MCF 10A (cell line): ENCODE measurements at regions of chr15 and their contacts with region 1.

Region 1: GRCh38 chr15:33737687-33738601 is 230.4 kb upstream of the CHRM5 start:
- DNase-seq: peak; percentile 61
- H3K4me3 Mint-ChIP-seq: no peak overlapping the region
- H3K27ac Mint-ChIP-seq: no peak overlapping the region
- H3K4me1 Mint-ChIP-seq: no peaks in the 10 kb centered on the region
- H3K27me3 Mint-ChIP-seq: no peaks in the 10 kb centered on the region
- CTCF ChIP-seq: peak; percentile 73

Region 2: DNA sequence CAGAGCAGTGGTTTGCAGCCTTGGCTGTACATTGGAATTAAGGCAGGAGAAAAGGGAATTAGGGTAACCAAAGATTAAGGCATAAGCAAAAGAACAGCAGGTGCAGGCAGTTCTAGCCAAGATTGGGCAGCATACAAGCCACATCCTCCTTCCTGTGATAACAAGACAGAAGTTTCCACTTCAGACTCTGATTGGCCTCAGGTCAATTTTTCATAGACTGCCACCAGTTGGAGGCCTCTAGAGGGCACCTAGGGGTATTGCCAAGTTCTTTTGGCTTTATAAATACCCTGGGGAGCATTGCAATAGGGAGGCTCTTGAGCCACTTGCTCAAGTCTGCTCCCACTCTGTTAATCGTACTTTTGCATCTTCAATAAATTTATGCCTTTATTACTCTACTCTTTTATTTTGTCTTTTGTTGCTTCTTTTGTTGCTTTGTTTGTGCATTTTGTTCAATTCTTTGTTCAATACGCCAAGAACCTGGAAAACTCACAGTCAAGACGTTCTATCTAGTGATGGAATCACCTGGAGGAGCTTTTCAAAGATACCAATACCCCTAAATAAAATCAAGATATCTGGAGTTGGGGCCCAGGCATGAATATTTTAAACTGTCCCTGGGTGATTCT is 511.3 kb before region 1 on chr15:
- CTCF ChIA-PET with region 1: interaction called, 45 read pairs
- POLR2A ChIA-PET with region 1: no interaction called
- intact Hi-C with region 1: no loop called
- DNase-seq: peak; percentile 65
- H3K4me3 Mint-ChIP-seq: no peak overlapping the region
- H3K27ac Mint-ChIP-seq: no peak overlapping the region
- H3K4me1 Mint-ChIP-seq: no peaks in the 10 kb centered on the region
- H3K27me3 Mint-ChIP-seq: peaks cover 14% of the 10 kb centered on the region
- CTCF ChIP-seq: peak; percentile 51

Region 3: GRCh38 chr15:33292717-33293307 is 445.1 kb before region 1 on chr15:
- CTCF ChIA-PET with region 1: interaction called, 48 read pairs
- POLR2A ChIA-PET with region 1: no interaction called
- intact Hi-C with region 1: no loop called
- DNase-seq: peak; percentile 79
- H3K4me3 Mint-ChIP-seq: no peak overlapping the region
- H3K27ac Mint-ChIP-seq: no peak overlapping the region
- H3K4me1 Mint-ChIP-seq: peaks cover 20% of the 10 kb centered on the region
- H3K27me3 Mint-ChIP-seq: no peaks in the 10 kb centered on the region
- CTCF ChIP-seq: peak; percentile 88

Region 4: DNA sequence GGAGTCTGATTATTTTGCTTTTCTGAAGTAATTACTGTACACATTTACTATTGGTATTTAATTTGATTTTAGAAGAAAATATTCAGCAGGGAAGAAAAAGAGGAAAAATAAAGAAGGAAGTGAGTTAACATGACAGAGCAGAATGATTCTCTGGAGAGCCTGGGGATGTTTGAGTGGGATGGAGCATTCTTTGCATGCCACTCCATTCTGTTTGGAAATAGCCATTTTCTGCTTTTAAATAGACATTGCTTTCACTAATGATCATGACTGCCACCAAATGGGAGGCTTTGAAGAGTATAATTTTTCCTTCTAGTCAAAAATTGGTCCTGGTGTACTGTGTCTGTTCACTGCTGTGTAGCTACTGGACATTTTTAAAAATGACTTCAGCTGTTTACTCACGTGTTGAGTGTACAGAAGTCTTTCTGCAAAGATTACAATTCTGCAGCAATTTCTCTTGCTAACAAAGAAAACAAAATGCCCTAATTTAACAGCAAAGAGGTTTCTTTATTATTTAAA is 231.1 kb before region 1 on chr15:
- CTCF ChIA-PET with region 1: no interaction called
- POLR2A ChIA-PET with region 1: no interaction called
- intact Hi-C with region 1: no loop called
- DNase-seq: no peak
- H3K4me3 Mint-ChIP-seq: no peak overlapping the region
- H3K27ac Mint-ChIP-seq: no peak overlapping the region
- H3K4me1 Mint-ChIP-seq: no peaks in the 10 kb centered on the region
- H3K27me3 Mint-ChIP-seq: peaks cover 37% of the 10 kb centered on the region
- CTCF ChIP-seq: no peak

Region 5: DNA sequence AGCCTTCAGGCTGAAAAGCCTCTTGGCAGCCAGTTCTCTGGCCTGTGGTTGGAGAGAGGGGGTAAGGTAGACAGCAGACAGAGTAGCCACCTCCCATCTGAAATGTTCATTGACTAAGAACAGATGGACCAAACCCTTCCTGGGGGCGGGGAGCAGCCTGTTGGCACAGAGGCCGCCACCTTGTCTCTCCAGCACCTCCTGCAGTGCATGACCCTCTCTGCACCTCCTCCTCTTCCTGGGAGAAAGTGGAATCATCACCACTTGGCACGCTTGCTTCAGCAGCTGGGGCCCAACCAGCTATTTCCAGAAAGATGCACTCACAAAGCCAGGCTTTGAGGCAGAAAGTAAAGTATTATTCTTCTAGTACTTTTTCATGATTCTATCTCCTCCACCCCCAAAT is 83.1 kb before region 1 on chr15:
- CTCF ChIA-PET with region 1: no interaction called
- POLR2A ChIA-PET with region 1: no interaction called
- intact Hi-C with region 1: no loop called
- DNase-seq: peak; percentile 36
- H3K4me3 Mint-ChIP-seq: no peak overlapping the region
- H3K27ac Mint-ChIP-seq: no peak overlapping the region
- H3K4me1 Mint-ChIP-seq: no peaks in the 10 kb centered on the region
- H3K27me3 Mint-ChIP-seq: peaks cover 16% of the 10 kb centered on the region
- CTCF ChIP-seq: no peak

Region 6: DNA sequence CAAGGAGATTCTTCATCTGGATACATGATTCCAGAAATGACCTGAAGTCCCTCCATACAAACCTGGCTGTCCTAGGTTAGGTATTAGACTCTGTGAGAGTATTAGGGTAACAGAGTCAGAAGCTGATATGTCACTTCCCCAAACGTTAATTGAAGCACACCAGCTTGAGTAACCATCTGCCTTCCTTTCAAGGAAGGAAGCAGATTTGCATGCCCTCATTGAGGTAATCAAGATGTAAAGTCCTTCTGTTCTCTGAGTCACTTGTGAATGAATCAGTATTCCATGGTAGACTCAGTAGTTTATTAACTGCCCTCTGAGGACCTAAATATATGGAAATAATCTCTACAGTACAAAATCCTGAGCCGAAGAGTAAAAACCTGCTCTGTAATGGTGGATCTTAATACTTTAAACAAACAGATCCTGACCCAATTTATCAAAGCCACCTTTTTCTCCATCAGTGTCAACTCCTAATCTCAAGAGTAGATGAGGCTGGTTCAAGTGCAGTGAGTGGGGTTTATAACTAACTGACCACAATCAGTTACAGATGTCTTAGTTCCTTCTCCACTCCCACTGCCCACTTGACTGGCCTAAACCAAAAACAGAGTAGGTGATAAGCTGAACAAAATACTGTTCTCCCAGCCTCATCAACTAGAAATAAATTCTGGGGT is 15.8 kb before region 1 on chr15:
- CTCF ChIA-PET with region 1: interaction called, 152 read pairs
- POLR2A ChIA-PET with region 1: no interaction called
- intact Hi-C with region 1: no loop called
- DNase-seq: no peak
- H3K4me3 Mint-ChIP-seq: no peak overlapping the region
- H3K27ac Mint-ChIP-seq: no peak overlapping the region
- H3K4me1 Mint-ChIP-seq: peaks cover 7% of the 10 kb centered on the region
- H3K27me3 Mint-ChIP-seq: no peaks in the 10 kb centered on the region
- CTCF ChIP-seq: no peak

Region 7: DNA sequence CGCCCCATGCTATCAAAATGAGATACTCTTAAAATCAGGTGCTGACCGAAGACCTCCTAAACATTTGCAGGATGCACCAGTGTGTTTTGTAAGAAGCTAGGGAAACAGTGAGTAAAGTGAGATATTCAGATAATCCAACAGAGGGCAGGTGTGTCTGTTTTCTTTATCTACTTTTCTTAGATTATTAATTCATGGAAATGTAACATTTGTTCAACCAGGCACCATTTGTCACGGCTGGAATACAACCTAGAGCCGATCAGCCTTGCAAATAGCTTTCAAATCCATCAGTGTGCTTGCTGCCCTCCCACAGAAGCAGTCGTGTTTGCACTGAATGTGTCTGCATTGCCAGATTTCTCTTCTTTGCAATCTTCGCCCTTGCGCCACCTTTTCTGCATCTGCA is 28.4 kb after region 1 on chr15:
- CTCF ChIA-PET with region 1: interaction called, 13 read pairs
- POLR2A ChIA-PET with region 1: no interaction called
- intact Hi-C with region 1: no loop called
- DNase-seq: peak; percentile 5
- H3K4me3 Mint-ChIP-seq: no peak overlapping the region
- H3K27ac Mint-ChIP-seq: no peak overlapping the region
- H3K4me1 Mint-ChIP-seq: no peaks in the 10 kb centered on the region
- H3K27me3 Mint-ChIP-seq: no peaks in the 10 kb centered on the region
- CTCF ChIP-seq: peak; percentile 15

Region 8: DNA sequence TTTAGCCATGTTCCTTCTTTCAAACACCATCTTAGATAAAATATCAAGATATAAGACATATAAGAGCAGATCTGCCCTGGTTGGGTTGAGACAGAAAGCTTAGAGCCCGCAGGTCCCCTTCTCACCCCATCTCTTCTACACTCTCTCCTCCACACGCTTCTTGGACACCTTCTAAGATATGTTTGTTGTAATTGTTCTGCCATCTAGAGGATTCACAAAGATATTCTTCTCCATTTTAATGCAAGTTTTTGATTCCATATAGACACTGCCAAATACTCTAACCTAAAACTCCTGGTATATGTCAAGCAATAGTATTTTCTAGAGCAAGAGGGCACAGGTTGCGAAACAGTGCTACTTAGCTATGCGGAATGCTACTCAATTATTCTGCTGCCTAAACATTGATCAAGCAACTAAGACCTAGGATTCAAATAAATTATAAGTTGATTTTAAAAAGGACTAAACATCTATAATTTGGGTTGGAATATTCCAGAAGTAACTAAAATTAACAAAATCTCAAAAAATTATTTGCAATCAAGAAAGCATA is 237.2 kb after region 1 on chr15:
- CTCF ChIA-PET with region 1: interaction called, 78 read pairs
- POLR2A ChIA-PET with region 1: interaction called, 3 read pairs
- intact Hi-C with region 1: loop called (anchors 5 kb)
- DNase-seq: no peak
- H3K4me3 Mint-ChIP-seq: no peak overlapping the region
- H3K27ac Mint-ChIP-seq: no peak overlapping the region
- H3K4me1 Mint-ChIP-seq: peaks cover 5% of the 10 kb centered on the region
- H3K27me3 Mint-ChIP-seq: no peaks in the 10 kb centered on the region
- CTCF ChIP-seq: no peak

Region 9: DNA sequence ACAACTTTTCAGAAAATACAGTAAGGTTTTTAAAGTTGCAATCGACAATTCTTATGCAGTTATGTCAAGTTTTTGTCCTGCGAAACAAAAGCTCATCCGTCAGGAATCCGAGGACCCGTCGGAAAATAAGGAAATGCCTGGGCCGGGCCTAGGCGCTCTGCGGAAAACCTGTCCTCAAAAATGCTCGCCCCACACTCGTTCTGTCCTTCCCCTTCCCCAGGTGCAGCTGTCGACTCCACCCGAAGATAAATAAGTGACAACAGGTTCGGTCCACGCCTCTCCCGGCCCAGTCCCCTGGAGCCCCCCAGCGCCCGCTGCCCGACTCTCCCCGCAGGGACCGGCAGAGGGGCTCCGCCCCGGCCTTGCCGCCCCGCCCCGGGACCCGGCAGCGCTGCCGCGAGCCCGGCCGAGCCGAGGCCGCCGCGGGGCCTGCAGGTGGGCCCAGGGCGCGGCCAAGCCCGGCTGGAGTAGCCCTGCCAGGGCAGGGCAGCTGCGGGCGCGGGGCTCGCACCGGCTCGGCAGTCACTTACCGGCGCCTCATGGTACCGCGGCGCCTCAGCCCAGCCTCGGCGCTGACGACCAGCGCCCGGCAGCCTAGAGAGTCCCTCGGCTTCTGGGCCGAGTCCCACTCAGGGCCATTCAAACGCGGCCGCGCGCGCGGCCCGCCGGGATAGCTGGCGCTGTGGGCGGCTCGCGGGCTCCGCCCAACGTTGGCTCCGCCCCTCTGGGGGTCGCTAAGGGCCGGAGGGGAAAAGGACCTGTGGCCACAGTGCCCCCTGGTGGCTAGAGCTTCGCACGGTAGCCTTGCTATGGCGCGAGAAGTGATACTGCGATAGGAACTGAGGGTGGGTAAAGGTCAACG is 471.7 kb after region 1 on chr15 and contains the start of gene KATNBL1:
- CTCF ChIA-PET with region 1: interaction called, 5 read pairs
- POLR2A ChIA-PET with region 1: no interaction called
- intact Hi-C with region 1: loop called (anchors 5 kb)
- DNase-seq: peak; percentile 95
- H3K4me3 Mint-ChIP-seq: peak within 1 kb of the TSS; percentile 80
- H3K27ac Mint-ChIP-seq: peak within 1 kb of the TSS; percentile 93
- H3K4me1 Mint-ChIP-seq: peaks cover 17% of the 10 kb centered on the region
- H3K27me3 Mint-ChIP-seq: no peaks in the 10 kb centered on the region
- CTCF ChIP-seq: peak; percentile 77
- total RNA-seq, gene KATNBL1: 38.2 and 47.6 TPM in 2 replicates

Region 10: DNA sequence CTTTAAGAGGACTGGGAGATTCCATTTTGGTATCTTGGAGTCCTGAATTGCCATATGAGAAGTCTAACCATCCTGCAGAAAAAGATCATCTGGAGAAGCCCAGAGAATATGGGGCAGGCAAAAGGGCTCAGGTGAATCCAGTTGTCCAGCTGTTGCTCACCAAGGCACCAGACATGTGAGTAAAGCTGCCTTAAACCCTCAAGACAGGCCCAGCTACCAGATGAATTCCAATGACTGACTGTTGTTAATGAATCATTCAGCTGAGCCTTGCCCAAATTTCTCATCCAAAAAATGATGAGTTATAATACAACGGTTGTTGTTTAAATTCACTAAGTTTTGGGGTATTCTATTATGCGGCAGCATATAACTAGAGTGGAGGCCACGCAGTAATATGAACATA is 1369.2 kb after region 1 on chr15:
- CTCF ChIA-PET with region 1: no interaction called
- POLR2A ChIA-PET with region 1: no interaction called
- intact Hi-C with region 1: no loop called
- DNase-seq: no peak
- H3K4me3 Mint-ChIP-seq: no peak overlapping the region
- H3K27ac Mint-ChIP-seq: no peak overlapping the region
- H3K4me1 Mint-ChIP-seq: no peaks in the 10 kb centered on the region
- H3K27me3 Mint-ChIP-seq: no peaks in the 10 kb centered on the region
- CTCF ChIP-seq: no peak